Left lung (tissue), 14 donors: ENCODE measurements at regions of chr14 and their contacts with region 1.

Region 1: GRCh38 chr14:39102969-39103957 is at the start of gene SEC23A:
- DNase-seq: peak; percentile 85 to 98 (median 94)
- ATAC-seq: peak; percentile 98
- H3K4me3 ChIP-seq: peak within 1 kb of the TSS; percentile 73 to 89
- H3K27ac ChIP-seq: peak within 1 kb of the TSS; percentile 95 to 96
- H3K4me1 ChIP-seq: peaks cover 13 to 50% of the 10 kb centered on the region in 2 donors
- H3K27me3 ChIP-seq: no peaks in the 10 kb centered on the region
- CTCF ChIP-seq: no peak
- polyA plus RNA-seq, gene SEC23A: 59.3 to 69.7 (median 64.4) TPM

Region 2: DNA sequence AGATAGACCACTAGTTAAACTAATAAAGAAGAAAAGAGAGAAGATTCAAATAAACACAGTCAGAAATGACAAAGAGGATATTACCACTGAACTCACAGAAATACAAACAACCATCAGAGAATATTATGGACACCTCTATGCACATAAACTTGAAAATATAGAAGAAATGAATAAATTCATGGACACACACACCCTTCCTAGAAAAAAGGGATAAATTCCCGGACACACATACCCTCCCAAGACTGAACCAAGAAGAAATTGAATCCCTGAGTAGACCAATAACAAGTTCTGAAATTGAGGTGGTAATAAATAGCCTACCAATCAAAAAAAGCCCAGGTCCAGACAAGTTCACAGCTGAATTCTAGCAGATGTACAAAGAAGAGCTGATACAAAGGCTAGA is 188.1 kb before region 1 on chr14:
- intact Hi-C with region 1: no loop called
- DNase-seq: no peak
- ATAC-seq: no peak
- H3K4me3 ChIP-seq: no peak overlapping the region
- H3K27ac ChIP-seq: no peak overlapping the region
- H3K4me1 ChIP-seq: no peaks in the 10 kb centered on the region
- H3K27me3 ChIP-seq: no peaks in the 10 kb centered on the region
- CTCF ChIP-seq: no peak

Region 3: DNA sequence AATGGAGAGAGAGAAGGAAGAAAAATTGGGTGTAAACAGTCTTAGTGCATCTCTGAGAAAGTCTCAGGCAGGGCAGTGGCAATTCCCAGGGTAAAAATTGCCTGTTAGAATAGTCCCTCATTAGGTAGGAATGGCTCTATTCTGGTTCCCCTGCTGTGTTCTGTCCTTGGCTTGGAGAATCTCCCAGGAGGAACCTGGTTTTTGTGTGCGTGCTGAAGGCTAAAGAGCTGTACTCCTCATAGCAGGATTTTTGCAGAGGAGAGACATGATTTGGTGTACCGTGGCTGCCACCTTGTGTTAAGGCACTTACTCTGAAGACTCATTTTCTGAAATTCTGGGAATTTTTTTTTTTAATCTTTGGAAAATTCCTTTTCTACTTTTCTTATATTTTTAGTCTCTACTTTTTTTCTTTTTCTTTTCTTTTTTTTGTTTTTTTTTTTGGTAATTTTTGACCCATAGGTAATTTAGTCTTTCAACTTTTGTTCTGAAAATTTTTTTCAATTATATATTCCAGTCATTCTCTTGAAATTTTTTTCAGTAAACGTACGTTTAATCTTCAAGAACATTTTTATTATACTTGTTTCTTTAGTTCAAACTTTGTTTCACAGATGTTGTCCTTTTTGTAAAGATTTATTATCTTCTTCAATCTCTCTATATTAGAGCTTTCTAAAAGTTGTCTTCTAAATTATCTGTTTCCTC is 265.1 kb after region 1 on chr14:
- intact Hi-C with region 1: loop called in 1 of 2 experiments (anchors 10 kb)
- DNase-seq: peak in 2 of 4 donors; percentile 48 to 76
- ATAC-seq: peak; percentile 76
- H3K4me3 ChIP-seq: no peak overlapping the region
- H3K27ac ChIP-seq: no peak overlapping the region
- H3K4me1 ChIP-seq: no peaks in the 10 kb centered on the region
- H3K27me3 ChIP-seq: no peaks in the 10 kb centered on the region
- CTCF ChIP-seq: peak in 1 of 2 donors; percentile 28